ENCODE measurements at regions of chr12 and their contacts with region 1.

Region 1: DNA sequence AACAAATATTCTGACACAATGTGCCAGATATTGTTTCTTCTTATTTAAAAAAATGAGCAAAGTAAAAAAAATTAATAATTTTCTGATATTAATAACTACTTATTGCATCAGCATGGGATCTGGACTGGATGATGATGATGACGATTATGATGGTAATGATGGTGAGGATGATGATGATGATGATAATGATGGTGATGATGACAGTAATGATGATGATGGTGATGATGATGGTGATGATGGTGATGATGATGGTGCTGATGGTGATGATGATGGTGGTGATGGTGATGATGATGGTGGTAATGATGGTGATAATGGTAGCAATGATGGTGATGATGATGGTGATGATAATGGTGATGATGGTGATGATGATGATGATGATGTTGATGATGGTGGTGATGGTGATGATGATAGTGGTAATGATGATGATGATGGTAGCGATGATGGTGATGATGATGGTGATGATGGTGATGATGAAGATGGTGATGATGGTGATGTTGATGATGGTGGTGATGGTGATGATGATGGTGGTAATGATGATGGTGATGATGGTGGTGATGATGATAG is 94.0 kb downstream of the SRRM4 start:
- DNase-seq: no peak
- ATAC-seq: no peak
- H3K4me3 ChIP-seq: no peak overlapping the region
- H3K4me3 Mint-ChIP-seq: no peak overlapping the region
- H3K27ac ChIP-seq: no peak overlapping the region
- H3K27ac Mint-ChIP-seq: no peak overlapping the region
- H3K4me1 ChIP-seq: no peaks in the 10 kb centered on the region
- H3K4me1 Mint-ChIP-seq: no peaks in the 10 kb centered on the region
- H3K27me3 ChIP-seq: no peaks in the 10 kb centered on the region
- H3K27me3 Mint-ChIP-seq: peaks cover 2% of the 10 kb centered on the region
- CTCF ChIP-seq: no peak

Region 2: DNA sequence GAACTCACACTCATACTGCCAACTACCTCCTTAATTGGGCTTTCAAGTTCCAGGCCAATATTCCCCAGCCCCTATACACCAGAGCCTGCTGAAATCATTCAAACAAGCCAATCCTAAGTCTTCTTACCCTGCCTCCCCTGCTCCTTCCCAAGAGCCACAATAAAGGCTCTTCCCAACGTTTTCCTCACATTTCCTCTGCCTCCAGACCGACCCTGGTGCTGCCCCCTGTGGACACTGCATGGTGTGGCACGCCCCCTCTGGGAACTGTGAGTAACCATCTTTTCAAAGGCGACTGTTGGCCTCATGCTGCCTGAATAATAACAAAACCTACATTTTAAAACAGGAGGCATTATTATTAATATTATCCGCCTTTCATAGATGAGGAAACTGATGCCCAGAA is 1602.3 kb before region 1 on chr12:
- CTCF ChIA-PET with region 1: no interaction called
- POLR2A ChIA-PET with region 1: no interaction called
- intact Hi-C with region 1: loop called in 1 of 2 experiments (anchors 5 kb)
- DNase-seq: no peak
- ATAC-seq: no peak
- H3K4me3 ChIP-seq: no peak overlapping the region
- H3K4me3 Mint-ChIP-seq: no peak overlapping the region
- H3K27ac ChIP-seq: no peak overlapping the region
- H3K27ac Mint-ChIP-seq: no peak overlapping the region
- H3K4me1 ChIP-seq: no peaks in the 10 kb centered on the region
- H3K4me1 Mint-ChIP-seq: no peaks in the 10 kb centered on the region
- H3K27me3 ChIP-seq: no peaks in the 10 kb centered on the region
- H3K27me3 Mint-ChIP-seq: no peaks in the 10 kb centered on the region
- CTCF ChIP-seq: no peak

Region 3: DNA sequence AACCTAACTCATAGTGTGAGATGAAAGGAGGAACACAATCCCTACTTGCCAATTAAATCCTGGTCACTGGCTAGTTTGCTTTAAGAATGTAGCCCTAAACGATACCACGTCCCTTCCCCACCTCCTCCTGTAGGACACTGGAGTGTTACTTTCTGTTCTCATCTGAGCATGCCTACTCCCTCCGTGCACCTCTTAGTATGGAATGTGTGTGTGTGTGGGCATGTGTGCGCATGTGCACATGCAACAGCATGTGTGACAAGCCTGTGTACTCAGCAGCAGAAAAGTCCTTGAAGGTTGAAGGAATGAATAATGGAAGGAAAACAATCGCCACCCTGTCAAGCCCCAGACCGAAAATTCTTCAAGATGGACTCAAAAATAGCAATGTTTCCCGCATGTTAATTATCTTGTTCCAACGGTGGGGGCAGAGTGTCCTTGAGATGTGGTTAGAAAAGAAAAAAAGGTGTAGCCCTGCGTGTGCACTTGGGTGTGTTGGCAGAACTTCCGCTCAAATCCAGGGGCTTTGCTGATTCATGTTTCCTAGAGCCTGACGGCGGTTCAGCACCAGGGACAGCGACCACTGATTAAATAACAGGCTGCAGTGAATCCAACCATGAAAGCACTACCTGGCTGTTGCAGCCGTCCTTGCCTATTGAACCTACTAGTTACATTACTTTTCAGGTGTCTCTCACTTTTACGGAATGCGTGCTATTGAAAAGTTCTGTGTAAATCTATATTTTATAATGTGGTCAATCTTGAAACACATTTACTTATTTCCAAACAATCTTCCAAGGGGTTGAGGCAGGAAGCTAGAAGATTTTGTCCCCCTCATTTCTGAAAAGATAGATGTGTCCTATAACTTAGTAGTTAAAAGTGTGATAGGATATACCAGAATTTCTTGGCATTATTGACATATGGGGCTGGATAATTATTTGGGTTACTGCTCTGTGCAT is 14.2 kb before region 1 on chr12:
- CTCF ChIA-PET with region 1: no interaction called
- POLR2A ChIA-PET with region 1: no interaction called
- intact Hi-C with region 1: no loop called
- DNase-seq: peak in 4 of 14 experiments; percentile 5 to 12 (median 9)
- ATAC-seq: no peak
- H3K4me3 ChIP-seq: no peak overlapping the region
- H3K4me3 Mint-ChIP-seq: no peak overlapping the region
- H3K27ac ChIP-seq: no peak overlapping the region
- H3K27ac Mint-ChIP-seq: no peak overlapping the region
- H3K4me1 ChIP-seq: no peaks in the 10 kb centered on the region
- H3K4me1 Mint-ChIP-seq: no peaks in the 10 kb centered on the region
- H3K27me3 ChIP-seq: no peaks in the 10 kb centered on the region
- H3K27me3 Mint-ChIP-seq: peaks cover 6% of the 10 kb centered on the region
- CTCF ChIP-seq: no peak

Measured in CD4-positive, alpha-beta T cell (primary cell).